IMR-90 (cell line): ENCODE measurements at regions of chr19 and their contacts with region 1.

Region 1: GRCh38 chr19:16495982-16496612 is at the starts of genes C19orf44 and CALR3:
- DNase-seq: peak; percentile 98
- ATAC-seq: peak; percentile 100
- H3K4me3 ChIP-seq: peak within 1 kb of the TSS; percentile 61
- H3K27ac ChIP-seq: peak within 1 kb of the TSS; percentile 28
- H3K4me1 ChIP-seq: peaks cover 3% of the 10 kb centered on the region; the same call in 1 of the 2 replicates
- H3K27me3 ChIP-seq: no peaks in the 10 kb centered on the region
- CTCF ChIP-seq: peak; percentile 15; the same call in 1 of the 2 replicates
- POLR2A ChIP-seq: no peak
- RAD21 ChIP-seq: 0 out of 2 replicates have a peak, but pooled peaks have one; percentile 14
- total RNA-seq, gene C19orf44: 1.4 and 1.7 TPM in 2 replicates
- total RNA-seq, gene CALR3: not detected in 2 replicates

Region 2: DNA sequence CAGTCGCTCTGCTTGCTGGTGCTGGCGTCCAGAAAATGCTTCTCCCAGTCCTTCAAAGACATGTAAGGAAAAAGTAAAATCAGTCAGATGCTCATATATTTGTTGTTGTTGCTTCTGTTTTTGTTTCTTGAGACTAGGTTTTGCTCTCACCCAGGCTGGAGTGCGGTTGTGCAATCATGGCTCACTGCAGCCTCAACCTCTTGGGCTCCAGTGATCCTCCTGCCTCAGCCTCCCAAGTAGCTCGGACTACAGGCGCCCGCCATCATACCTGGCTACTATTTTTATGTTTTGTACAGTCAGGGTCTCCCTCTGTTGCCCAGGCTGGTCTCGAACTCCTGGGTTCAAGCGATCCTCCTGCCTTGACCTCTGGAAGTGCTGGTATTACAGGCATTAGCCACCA is 13.4 kb before region 1 on chr19:
- CTCF ChIA-PET with region 1: no interaction called
- POLR2A ChIA-PET with region 1: interaction called, 14 read pairs
- dilution Hi-C with region 1: no loop called
- in situ Hi-C with region 1: no loop called
- intact Hi-C with region 1: no loop called
- DNase-seq: no peak
- ATAC-seq: no peak
- H3K4me3 ChIP-seq: no peak overlapping the region
- H3K27ac ChIP-seq: no peak overlapping the region
- H3K4me1 ChIP-seq: no peaks in the 10 kb centered on the region
- H3K27me3 ChIP-seq: peaks cover 2% of the 10 kb centered on the region
- CTCF ChIP-seq: no peak
- POLR2A ChIP-seq: no peak
- RAD21 ChIP-seq: no peak

Region 3: DNA sequence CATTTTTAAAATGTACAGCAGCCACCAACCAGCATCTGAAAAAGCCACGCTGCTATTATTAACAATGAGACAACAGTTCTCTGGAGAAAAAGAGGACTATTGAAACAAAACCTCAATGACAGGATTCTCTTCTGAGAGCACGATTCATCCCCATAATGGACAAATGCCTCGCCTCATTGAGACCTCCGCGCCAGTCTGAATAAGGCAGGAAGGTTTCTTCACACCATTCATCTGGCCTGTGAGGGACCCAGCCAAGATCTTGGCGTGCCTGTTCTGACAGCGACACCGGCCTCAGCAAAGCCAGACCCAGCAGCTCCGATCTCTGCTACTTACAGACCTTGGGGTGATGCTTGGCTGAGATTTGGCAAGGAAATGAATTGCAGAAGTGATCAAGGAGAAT is 149.0 kb after region 1 on chr19:
- CTCF ChIA-PET with region 1: no interaction called
- POLR2A ChIA-PET with region 1: interaction called, 10 read pairs
- dilution Hi-C with region 1: no loop called
- in situ Hi-C with region 1: no loop called
- intact Hi-C with region 1: no loop called
- DNase-seq: no peak
- ATAC-seq: no peak
- H3K4me3 ChIP-seq: no peak overlapping the region
- H3K27ac ChIP-seq: no peak overlapping the region
- H3K4me1 ChIP-seq: no peaks in the 10 kb centered on the region
- H3K27me3 ChIP-seq: no peaks in the 10 kb centered on the region
- CTCF ChIP-seq: no peak
- POLR2A ChIP-seq: no peak
- RAD21 ChIP-seq: no peak